Prostate gland (tissue), 2 donors: ENCODE measurements at regions of chr20 and their contacts with region 1.

Region 1: DNA sequence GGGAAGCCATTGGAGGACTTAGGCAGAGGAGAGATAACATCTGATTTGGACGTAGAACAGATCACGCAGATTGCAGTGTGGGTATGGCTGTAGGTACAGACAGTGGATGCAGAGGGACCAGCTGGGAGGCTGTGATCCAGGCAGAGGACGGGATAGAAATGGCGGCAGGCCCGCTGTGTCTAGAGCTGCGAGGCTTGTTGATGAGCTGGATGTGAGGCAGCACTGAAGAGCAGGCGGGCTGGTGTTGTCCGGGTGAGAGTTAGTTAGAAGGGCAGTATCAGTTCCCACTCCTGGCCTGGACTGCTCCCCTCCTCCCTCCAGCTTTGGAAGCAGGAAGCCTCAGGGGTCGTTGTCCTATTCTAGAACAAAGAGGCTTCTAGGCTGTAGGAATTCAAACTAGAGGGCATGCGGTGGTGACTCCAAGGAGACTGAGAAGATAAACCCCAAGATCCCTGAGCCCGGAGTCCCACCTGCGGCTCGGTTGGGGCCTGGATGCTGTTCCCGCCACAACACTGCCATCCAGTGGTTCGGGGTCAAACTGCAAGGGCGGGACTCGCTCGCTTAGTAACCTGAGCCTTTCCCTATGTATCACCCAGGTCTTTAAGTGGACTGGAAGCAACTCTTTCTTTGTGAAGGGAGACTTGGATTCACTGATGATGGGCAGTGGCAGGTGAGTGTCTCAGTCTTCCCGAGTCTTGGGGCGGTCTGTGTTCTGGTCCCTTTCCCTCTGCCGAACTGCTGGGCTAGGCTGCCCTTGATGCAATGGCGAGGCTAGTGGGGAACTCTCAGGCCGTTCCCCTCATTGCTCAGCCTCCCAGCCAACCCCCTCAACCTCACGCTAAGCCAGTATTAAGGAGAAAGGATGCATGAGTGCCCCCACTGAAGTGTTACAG is 11.2 kb downstream of the TLDC2 start:
- DNase-seq: peak; percentile 83
- H3K4me3 ChIP-seq: no peak overlapping the region
- H3K27ac ChIP-seq: peak overlapping the region; percentile 4 to 11
- H3K4me1 ChIP-seq: no peaks in the 10 kb centered on the region
- H3K27me3 ChIP-seq: no peaks in the 10 kb centered on the region
- CTCF ChIP-seq: peak; percentile 76 to 94 (median 90)
- POLR2A ChIP-seq: no peak

Region 2: DNA sequence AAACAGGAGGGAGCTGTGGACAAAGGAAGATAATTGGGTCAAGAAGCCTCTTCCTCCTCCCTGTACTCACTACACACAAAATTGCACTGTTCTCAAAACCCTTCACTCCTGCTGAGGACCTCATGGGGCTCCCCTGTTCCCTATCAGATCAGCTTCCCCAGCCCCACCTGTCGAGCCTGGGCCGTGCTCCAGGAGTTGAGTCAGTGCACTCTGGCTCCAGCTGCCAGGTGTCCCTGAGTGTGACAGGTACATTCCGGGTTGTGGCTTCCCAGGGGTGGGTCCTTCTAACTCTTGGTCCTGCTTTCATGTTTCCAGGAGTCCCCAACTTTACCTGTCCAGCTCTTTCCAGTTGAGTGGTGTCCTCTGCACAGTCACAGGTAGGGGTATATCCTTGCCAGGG is 273.1 kb before region 1 on chr20:
- intact Hi-C with region 1: loop called (anchors 5 kb)
- DNase-seq: peak; percentile 11
- H3K4me3 ChIP-seq: no peak overlapping the region
- H3K27ac ChIP-seq: no peak overlapping the region
- H3K4me1 ChIP-seq: no peaks in the 10 kb centered on the region
- H3K27me3 ChIP-seq: no peaks in the 10 kb centered on the region
- CTCF ChIP-seq: no peak
- POLR2A ChIP-seq: no peak

Region 3: GRCh38 chr20:36808317-36809257 is 78.5 kb before region 1 on chr20:
- intact Hi-C with region 1: no loop called
- DNase-seq: no peak
- H3K4me3 ChIP-seq: no peak overlapping the region
- H3K27ac ChIP-seq: no peak overlapping the region
- H3K4me1 ChIP-seq: peaks cover 4% of the 10 kb centered on the region
- H3K27me3 ChIP-seq: no peaks in the 10 kb centered on the region
- CTCF ChIP-seq: peak in 3 of 4 experiments; percentile 33 to 41 (median 39)
- POLR2A ChIP-seq: no peak

Region 4: DNA sequence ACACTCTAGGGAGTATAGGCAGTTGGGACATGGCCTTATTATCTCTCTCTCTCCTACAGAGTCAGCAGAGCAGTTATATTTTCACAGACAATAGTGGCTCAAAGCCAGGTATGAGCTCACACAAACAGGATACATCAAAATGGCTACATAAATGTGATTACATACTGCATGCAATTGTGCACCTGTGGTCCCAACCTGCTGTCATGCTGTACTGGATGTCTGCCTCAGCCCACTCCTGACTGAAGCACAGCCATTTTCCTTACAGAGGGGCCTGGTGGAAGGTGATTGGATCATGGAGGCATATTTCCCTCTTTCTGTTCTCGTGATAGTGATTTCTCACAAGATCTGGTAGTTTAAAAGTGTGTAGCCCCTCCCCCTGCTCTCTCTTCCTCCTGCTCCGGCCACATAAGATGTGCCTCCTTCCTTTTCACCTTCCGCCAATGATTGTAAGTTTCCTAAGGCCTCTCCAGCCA is 101.4 kb after region 1 on chr20:
- intact Hi-C with region 1: no loop called
- DNase-seq: no peak
- H3K4me3 ChIP-seq: no peak overlapping the region
- H3K27ac ChIP-seq: no peak overlapping the region
- H3K4me1 ChIP-seq: no peaks in the 10 kb centered on the region
- H3K27me3 ChIP-seq: no peaks in the 10 kb centered on the region
- CTCF ChIP-seq: no peak
- POLR2A ChIP-seq: no peak